Activated CD8-positive, alpha-beta T cell treated with anti-CD3 and anti-CD28 coated beads for 36 hours (primary cell): ENCODE measurements at regions of chr13 and their contacts with region 1.

Region 1: DNA sequence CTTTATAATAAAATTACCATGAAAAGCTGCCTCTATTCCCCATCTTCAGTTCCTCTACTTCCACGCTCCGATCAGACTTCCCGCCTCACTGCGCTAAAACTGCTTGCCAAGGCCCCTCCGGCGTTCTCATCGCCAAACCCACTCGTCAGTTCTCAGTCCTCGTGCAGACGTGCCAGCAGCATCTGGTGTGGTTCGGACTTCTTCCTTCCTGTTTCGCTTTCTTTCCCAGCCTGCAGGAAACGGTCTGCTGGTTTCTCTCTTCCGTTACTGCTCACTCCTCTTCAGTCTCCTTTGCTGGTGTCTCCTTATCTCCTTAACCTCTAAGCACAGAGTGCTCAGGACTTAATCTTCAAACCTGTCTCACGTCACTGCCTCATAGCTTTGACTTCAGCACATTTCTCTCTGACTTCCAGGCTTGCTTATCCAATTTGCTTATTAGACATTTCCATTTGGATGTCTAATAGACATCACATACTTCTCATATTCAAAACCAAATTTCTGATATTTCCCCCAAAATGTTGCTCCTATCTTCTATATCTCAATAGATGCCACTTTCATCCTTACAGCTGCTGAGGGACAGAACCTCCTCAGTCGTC is 40.3 kb downstream of the RCBTB2 start:
- DNase-seq: peak; percentile 82
- ATAC-seq: peak; percentile 84
- H3K4me3 Mint-ChIP-seq: no peak overlapping the region
- H3K27ac Mint-ChIP-seq: no peak overlapping the region
- H3K4me1 Mint-ChIP-seq: peaks cover 42% of the 10 kb centered on the region
- H3K27me3 Mint-ChIP-seq: no peaks in the 10 kb centered on the region
- CTCF ChIP-seq: no peak

Region 2: GRCh38 chr13:48400850-48401291 is 91.7 kb before region 1 on chr13:
- CTCF ChIA-PET with region 1: no interaction called
- POLR2A ChIA-PET with region 1: no interaction called
- intact Hi-C with region 1: loop called (anchors 10 kb)
- DNase-seq: no peak
- ATAC-seq: peak; percentile 32
- H3K4me3 Mint-ChIP-seq: no peak overlapping the region
- H3K27ac Mint-ChIP-seq: peak overlapping the region; percentile 7
- H3K4me1 Mint-ChIP-seq: peaks cover 43% of the 10 kb centered on the region
- H3K27me3 Mint-ChIP-seq: no peaks in the 10 kb centered on the region
- CTCF ChIP-seq: no peak